ENCODE measurements at regions of chr19 and their contacts with region 1.

Region 1: DNA sequence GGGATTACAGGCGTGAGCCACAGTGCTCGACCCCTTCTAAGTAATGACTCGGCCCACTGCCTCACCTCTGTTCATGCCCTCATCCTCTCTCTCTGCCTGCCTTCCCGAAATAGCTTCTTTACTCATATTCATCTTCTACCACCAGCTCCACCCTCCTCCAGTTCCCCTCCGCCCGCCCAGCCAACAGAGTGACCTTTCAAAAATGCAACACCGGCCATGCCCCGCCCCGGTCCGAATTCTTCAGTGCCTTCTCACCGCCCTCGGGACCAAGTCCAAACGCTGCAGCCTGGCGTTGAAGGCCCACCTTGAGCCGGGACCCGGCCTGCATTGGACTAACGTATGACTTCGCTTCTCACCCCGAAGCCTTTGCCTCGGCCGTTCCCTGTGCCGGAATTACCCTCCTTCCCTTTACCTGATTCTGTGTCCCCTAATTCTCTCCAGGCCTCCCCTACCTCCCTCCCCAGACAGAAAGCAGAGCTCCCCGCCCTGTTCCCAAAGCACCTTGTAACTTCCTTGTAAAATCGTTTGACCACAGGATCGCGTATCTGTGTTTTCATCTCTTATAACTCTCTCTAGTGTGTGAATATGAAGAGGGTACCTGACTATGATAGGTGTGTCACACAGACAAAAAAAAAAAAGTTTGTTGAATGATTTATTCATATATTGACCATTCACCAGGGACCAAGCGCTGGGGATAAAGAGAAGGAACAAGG is 8.1 kb upstream of the MUC16 start:
- DNase-seq: no peak
- ATAC-seq: no peak
- H3K4me3 ChIP-seq: no peak overlapping the region
- H3K4me3 Mint-ChIP-seq: no peak overlapping the region
- H3K27ac ChIP-seq: no peak overlapping the region
- H3K27ac Mint-ChIP-seq: no peak overlapping the region
- H3K4me1 ChIP-seq: no peaks in the 10 kb centered on the region
- H3K4me1 Mint-ChIP-seq: no peaks in the 10 kb centered on the region
- H3K27me3 ChIP-seq: no peaks in the 10 kb centered on the region
- H3K27me3 Mint-ChIP-seq: peaks cover 10% of the 10 kb centered on the region
- CTCF ChIP-seq: no peak

Region 2: GRCh38 chr19:8484331-8484894 is 533.9 kb before region 1 on chr19:
- CTCF ChIA-PET with region 1: no interaction called
- POLR2A ChIA-PET with region 1: no interaction called
- intact Hi-C with region 1: no loop called
- DNase-seq: no peak
- ATAC-seq: no peak
- H3K4me3 ChIP-seq: no peak overlapping the region
- H3K4me3 Mint-ChIP-seq: no peak overlapping the region
- H3K27ac ChIP-seq: no peak overlapping the region
- H3K27ac Mint-ChIP-seq: no peak overlapping the region
- H3K4me1 ChIP-seq: peaks cover 44% of the 10 kb centered on the region
- H3K4me1 Mint-ChIP-seq: peaks cover 60% of the 10 kb centered on the region
- H3K27me3 ChIP-seq: no peaks in the 10 kb centered on the region
- H3K27me3 Mint-ChIP-seq: no peaks in the 10 kb centered on the region
- CTCF ChIP-seq: no peak

Region 3: GRCh38 chr19:8663920-8664670 is 354.2 kb before region 1 on chr19:
- CTCF ChIA-PET with region 1: no interaction called
- POLR2A ChIA-PET with region 1: no interaction called
- intact Hi-C with region 1: no loop called
- DNase-seq: peak in 8 of 9 experiments; percentile 17 to 68 (median 44)
- ATAC-seq: peak; percentile 51
- H3K4me3 ChIP-seq: peak overlapping the region; percentile 11 to 33
- H3K4me3 Mint-ChIP-seq: peak overlapping the region; percentile 39
- H3K27ac ChIP-seq: peak overlapping the region in 1 of 2 experiments; percentile 62
- H3K27ac Mint-ChIP-seq: peak overlapping the region; percentile 25
- H3K4me1 ChIP-seq: peaks cover 39% of the 10 kb centered on the region
- H3K4me1 Mint-ChIP-seq: peaks cover 39% of the 10 kb centered on the region
- H3K27me3 ChIP-seq: no peaks in the 10 kb centered on the region
- H3K27me3 Mint-ChIP-seq: no peaks in the 10 kb centered on the region
- CTCF ChIP-seq: no peak

Region 4: GRCh38 chr19:9046694-9047093 is 28.4 kb after region 1 on chr19:
- CTCF ChIA-PET with region 1: no interaction called
- POLR2A ChIA-PET with region 1: no interaction called
- intact Hi-C with region 1: loop called in 1 of 2 experiments (anchors 1 kb)
- DNase-seq: no peak
- ATAC-seq: no peak
- H3K4me3 ChIP-seq: no peak overlapping the region
- H3K4me3 Mint-ChIP-seq: no peak overlapping the region
- H3K27ac ChIP-seq: no peak overlapping the region
- H3K27ac Mint-ChIP-seq: no peak overlapping the region
- H3K4me1 ChIP-seq: no peaks in the 10 kb centered on the region
- H3K4me1 Mint-ChIP-seq: no peaks in the 10 kb centered on the region
- H3K27me3 ChIP-seq: no peaks in the 10 kb centered on the region
- H3K27me3 Mint-ChIP-seq: peaks cover 16% of the 10 kb centered on the region
- CTCF ChIP-seq: no peak